H1 (cell line): ENCODE measurements at regions of chr5 and their contacts with region 1.

Region 1: DNA sequence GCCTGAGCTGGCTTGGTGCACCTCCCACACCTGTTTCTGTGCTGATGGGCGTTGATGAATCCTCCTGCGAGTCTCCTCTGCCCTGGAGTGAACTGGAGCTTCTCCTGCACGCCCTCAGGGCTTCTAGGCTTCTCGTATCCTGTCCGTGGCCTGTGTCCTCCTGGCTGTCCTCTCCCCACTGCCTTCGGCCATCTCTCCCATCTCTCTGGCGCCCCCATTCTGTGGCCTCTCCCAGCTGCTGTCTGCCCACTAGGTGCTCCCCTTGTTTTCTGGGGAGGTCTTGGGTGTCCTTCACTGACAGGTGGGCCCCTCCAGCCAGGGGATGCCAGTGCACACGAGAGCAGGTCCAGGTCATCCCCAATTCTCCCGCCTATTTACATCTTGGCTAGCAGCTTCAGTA is 28.8 kb downstream of the AHRR start:
- DNase-seq: peak in 1 of 2 experiments; percentile 81
- H3K4me3 ChIP-seq: no peak overlapping the region
- H3K27ac ChIP-seq: no peak overlapping the region
- H3K4me1 ChIP-seq: peaks cover 0 to 12% (median 5%) of the 10 kb centered on the region in 4 experiments; a peak in 6 of 7 replicates
- H3K27me3 ChIP-seq: no peaks in the 10 kb centered on the region
- CTCF ChIP-seq: peak; percentile 81 to 96 (median 89)
- EP300 ChIP-seq: no peak
- POLR2A ChIP-seq: no peak
- RAD21 ChIP-seq: peak; percentile 54 to 69

Region 2: DNA sequence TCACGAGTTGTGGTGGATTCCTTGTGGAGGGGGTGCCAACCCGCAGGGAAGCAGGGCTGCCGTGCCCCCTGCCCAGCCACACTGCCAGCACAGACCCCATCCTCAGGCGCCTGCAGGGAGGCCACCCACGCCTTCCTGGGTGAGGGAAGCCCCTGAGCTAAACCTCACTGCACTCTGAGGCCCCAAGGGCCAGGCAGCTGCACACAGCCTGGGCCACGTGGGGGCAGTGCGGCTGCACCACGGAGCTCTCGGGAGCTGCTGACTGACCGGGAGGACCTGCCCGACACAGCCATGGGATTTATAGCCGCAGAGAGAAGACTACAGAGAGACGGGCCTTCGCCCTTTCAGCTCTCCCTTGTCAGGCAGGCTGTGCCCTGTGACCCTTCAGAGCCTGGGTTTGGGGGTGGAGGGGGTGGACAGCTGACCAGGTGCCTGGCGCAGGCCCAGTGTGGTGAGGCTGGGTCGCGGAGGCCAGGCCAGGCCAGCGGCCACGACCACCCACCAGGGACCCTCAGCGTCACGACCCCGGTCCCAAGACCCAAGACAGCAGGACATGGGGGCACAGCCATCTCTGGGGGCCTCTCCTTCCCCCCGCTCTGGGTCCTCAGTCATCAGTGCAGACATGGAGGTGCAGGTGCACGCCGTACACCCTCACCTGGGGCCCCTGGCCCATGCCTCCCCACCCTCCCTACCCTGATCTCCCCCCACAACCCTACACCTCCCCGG is 33.1 kb before region 1 on chr5:
- CTCF ChIA-PET with region 1: interaction called, 11 read pairs
- POLR2A ChIA-PET with region 1: no interaction called
- DNase-seq: peak; percentile 50 to 86
- H3K4me3 ChIP-seq: no peak overlapping the region
- H3K27ac ChIP-seq: no peak overlapping the region
- H3K4me1 ChIP-seq: peaks cover 0 to 19% (median under 1%) of the 10 kb centered on the region in 4 experiments; a peak in 5 of 7 replicates
- H3K27me3 ChIP-seq: peaks cover 28 to 38% (median 35%) of the 10 kb centered on the region in 4 experiments
- CTCF ChIP-seq: peak in 2 of 3 experiments; percentile 92; a peak in 3 of 4 replicates
- EP300 ChIP-seq: no peak; a peak in 1 of 3 replicates
- POLR2A ChIP-seq: no peak
- RAD21 ChIP-seq: peak; percentile 95 to 97

Region 3: GRCh38 chr5:337563-338130 is 12.7 kb before region 1 on chr5:
- CTCF ChIA-PET with region 1: interaction called, 38 read pairs
- POLR2A ChIA-PET with region 1: interaction called, 7 read pairs
- DNase-seq: no peak
- H3K4me3 ChIP-seq: no peak overlapping the region
- H3K27ac ChIP-seq: no peak overlapping the region
- H3K4me1 ChIP-seq: no peaks in the 10 kb centered on the region; a peak in 1 of 7 replicates
- H3K27me3 ChIP-seq: peaks cover 0 to 2% (median 2%) of the 10 kb centered on the region in 4 experiments; a peak in 6 of 7 replicates
- CTCF ChIP-seq: peak; percentile 19 to 68 (median 54)
- EP300 ChIP-seq: no peak
- POLR2A ChIP-seq: no peak
- RAD21 ChIP-seq: peak; percentile 32 to 56; a peak in 3 of 4 replicates

Region 4: GRCh38 chr5:368183-369084 is 18.1 kb after region 1 on chr5:
- CTCF ChIA-PET with region 1: interaction called, 10 read pairs
- POLR2A ChIA-PET with region 1: interaction called, 3 read pairs
- DNase-seq: peak in 1 of 2 experiments; percentile 27
- H3K4me3 ChIP-seq: no peak overlapping the region
- H3K27ac ChIP-seq: no peak overlapping the region
- H3K4me1 ChIP-seq: peaks cover 0 to 9% (median 5%) of the 10 kb centered on the region in 4 experiments; a peak in 5 of 7 replicates
- H3K27me3 ChIP-seq: peaks cover 0 to 8% (median under 1%) of the 10 kb centered on the region in 4 experiments; a peak in 2 of 7 replicates
- CTCF ChIP-seq: no peak
- EP300 ChIP-seq: no peak
- POLR2A ChIP-seq: no peak
- RAD21 ChIP-seq: no peak

Region 5: GRCh38 chr5:378976-379742 is 28.8 kb after region 1 on chr5:
- CTCF ChIA-PET with region 1: interaction called, 11 read pairs
- POLR2A ChIA-PET with region 1: interaction called, 3 read pairs
- DNase-seq: no peak
- H3K4me3 ChIP-seq: no peak overlapping the region
- H3K27ac ChIP-seq: no peak overlapping the region
- H3K4me1 ChIP-seq: no peaks in the 10 kb centered on the region; a peak in 2 of 7 replicates
- H3K27me3 ChIP-seq: peaks cover 0 to 10% (median 9%) of the 10 kb centered on the region in 4 experiments; a peak in 6 of 7 replicates
- CTCF ChIP-seq: no peak
- EP300 ChIP-seq: no peak
- POLR2A ChIP-seq: no peak
- RAD21 ChIP-seq: no peak

Region 6: DNA sequence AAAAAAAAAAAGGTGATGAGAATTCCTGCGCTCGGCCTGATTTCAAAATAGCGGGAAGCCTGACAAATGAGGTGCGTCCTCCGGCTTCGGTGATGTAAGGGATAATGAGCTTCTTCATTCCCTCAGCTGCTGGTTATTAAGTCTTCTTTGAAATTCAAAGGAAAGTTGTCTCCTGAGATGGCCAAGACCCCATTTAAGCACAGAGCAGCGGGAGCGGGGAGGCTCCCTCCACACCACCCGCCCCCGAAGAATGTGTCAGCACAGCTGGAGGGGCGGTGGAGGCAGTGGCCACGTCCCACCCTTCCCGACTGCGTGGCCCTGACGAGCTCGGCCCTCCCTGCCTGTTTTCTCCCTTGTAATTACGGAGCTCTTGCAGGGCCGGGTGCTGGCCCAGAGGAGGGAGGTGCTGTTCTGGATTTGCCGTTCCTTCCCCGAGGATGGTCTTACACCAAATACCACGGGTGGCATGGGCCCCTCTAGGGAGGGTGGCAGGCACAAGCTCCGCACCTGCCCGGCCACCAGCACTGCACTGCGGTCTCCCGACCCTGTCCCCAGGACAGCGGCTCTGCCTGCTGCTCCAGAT is 142.9 kb after region 1 on chr5:
- CTCF ChIA-PET with region 1: no interaction called
- POLR2A ChIA-PET with region 1: no interaction called
- DNase-seq: no peak
- H3K4me3 ChIP-seq: no peak overlapping the region
- H3K27ac ChIP-seq: no peak overlapping the region
- H3K4me1 ChIP-seq: peaks cover 0 to 22% (median 5%) of the 10 kb centered on the region in 4 experiments; a peak in 4 of 7 replicates
- H3K27me3 ChIP-seq: peaks cover 0 to 31% (median 25%) of the 10 kb centered on the region in 4 experiments; a peak in 6 of 7 replicates
- CTCF ChIP-seq: no peak
- EP300 ChIP-seq: no peak
- POLR2A ChIP-seq: no peak
- RAD21 ChIP-seq: no peak